Ascending aorta (tissue), 2 donors: ENCODE measurements at regions of chr17 and their contacts with region 1.

Region 1: GRCh38 chr17:9432134-9432885 is 143.3 kb downstream of the STX8 start:
- DNase-seq: no peak
- H3K4me3 ChIP-seq: no peak overlapping the region
- H3K27ac ChIP-seq: peak overlapping the region; percentile 13 to 25
- H3K4me1 ChIP-seq: peaks cover 0 to 8% of the 10 kb centered on the region in 2 donors
- H3K27me3 ChIP-seq: no peaks in the 10 kb centered on the region
- CTCF ChIP-seq: no peak

Region 2: GRCh38 chr17:9052921-9053320 is 379.4 kb before region 1 on chr17:
- intact Hi-C with region 1: no loop called
- DNase-seq: no peak
- H3K4me3 ChIP-seq: no peak overlapping the region
- H3K27ac ChIP-seq: peak overlapping the region in 1 of 2 donors; percentile 0
- H3K4me1 ChIP-seq: peaks cover 0 to 5% of the 10 kb centered on the region in 2 donors
- H3K27me3 ChIP-seq: no peaks in the 10 kb centered on the region
- CTCF ChIP-seq: no peak

Region 3: GRCh38 chr17:9475101-9475658 is 42.9 kb after region 1 on chr17:
- intact Hi-C with region 1: loop called (anchors 5 kb)
- DNase-seq: no peak
- H3K4me3 ChIP-seq: no peak overlapping the region
- H3K27ac ChIP-seq: no peak overlapping the region
- H3K4me1 ChIP-seq: no peaks in the 10 kb centered on the region
- H3K27me3 ChIP-seq: no peaks in the 10 kb centered on the region
- CTCF ChIP-seq: no peak